Natural killer cell (primary cell): ENCODE measurements at regions of chr9 and their contacts with region 1.

Region 1: DNA sequence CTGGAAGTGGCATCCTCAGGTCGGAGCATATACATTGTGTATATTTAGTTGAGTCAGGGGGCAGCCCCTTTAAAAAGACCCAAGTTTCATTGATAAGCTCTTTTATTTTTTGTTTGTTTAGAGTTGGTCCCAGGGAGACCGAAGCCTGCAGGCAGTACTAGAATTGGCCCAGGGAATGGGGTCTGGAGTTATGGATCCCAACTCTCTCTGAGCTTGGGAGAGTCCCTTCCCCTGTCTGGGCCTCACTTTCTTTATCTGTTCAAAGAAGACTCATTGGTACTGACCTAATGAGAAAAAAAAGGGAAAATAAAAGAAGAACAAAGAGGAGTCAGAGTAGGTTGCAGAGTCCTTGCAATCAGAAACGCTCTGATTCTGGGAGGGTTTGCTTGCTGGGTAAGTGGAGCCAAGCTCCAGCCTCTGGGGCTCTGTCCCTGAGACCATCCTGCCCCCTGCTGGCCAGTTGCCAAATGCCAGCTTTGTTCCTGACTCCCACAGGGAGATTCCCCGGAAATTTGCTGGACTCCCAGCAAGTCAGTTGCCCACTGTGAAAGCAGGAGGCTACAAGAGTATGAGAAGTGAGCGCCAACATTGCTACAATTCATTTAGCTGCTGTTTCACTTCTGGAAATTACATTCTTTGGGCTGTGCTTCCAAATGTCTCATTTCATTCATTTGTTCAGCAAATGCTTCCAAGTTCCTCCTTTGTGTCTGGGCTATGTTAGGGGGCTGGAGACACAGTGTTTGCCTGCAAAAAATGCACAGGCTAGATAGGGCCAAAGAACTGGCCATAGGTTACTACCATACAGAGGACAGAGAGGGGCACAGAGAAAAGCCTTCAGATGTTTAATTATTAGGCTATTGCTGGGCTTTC is 156.2 kb downstream of the MELK start:
- DNase-seq: peak; percentile 53 to 75
- ATAC-seq: peak in 1 of 3 donors; percentile 69
- H3K4me3 ChIP-seq: no peak overlapping the region
- H3K4me3 Mint-ChIP-seq: no peak overlapping the region
- H3K27ac ChIP-seq: no peak overlapping the region
- H3K27ac Mint-ChIP-seq: no peak overlapping the region
- H3K4me1 ChIP-seq: no peaks in the 10 kb centered on the region
- H3K4me1 Mint-ChIP-seq: no peaks in the 10 kb centered on the region
- H3K27me3 ChIP-seq: no peaks in the 10 kb centered on the region
- H3K27me3 Mint-ChIP-seq: no peaks in the 10 kb centered on the region
- CTCF ChIP-seq: peak; percentile 83

Region 2: DNA sequence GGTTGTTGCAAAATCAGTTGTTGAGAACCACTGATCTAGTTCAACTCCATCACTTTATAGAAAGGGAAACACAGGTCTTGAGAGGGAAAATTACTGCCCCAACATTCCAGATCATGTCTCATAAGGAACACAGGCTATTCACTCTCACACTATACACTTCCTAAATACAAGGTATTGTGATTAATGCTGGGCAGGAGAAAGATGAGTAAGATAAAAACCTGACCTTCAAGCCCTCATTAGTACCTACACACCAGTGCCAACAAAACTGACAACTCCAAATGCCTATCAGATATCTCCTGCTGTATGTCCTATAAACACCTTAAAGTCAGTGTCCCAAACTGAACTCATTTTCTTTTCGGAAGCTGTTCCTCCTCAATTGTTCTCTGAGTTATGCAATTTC is 478.8 kb before region 1 on chr9:
- intact Hi-C with region 1: loop called (anchors 5 kb)
- DNase-seq: no peak
- ATAC-seq: no peak
- H3K4me3 ChIP-seq: no peak overlapping the region
- H3K4me3 Mint-ChIP-seq: no peak overlapping the region
- H3K27ac ChIP-seq: no peak overlapping the region
- H3K27ac Mint-ChIP-seq: peak overlapping the region in 1 of 2 donors; percentile 9
- H3K4me1 ChIP-seq: no peaks in the 10 kb centered on the region
- H3K4me1 Mint-ChIP-seq: peaks cover 0 to 12% of the 10 kb centered on the region in 2 donors
- H3K27me3 ChIP-seq: no peaks in the 10 kb centered on the region
- H3K27me3 Mint-ChIP-seq: no peaks in the 10 kb centered on the region
- CTCF ChIP-seq: no peak

Region 3: DNA sequence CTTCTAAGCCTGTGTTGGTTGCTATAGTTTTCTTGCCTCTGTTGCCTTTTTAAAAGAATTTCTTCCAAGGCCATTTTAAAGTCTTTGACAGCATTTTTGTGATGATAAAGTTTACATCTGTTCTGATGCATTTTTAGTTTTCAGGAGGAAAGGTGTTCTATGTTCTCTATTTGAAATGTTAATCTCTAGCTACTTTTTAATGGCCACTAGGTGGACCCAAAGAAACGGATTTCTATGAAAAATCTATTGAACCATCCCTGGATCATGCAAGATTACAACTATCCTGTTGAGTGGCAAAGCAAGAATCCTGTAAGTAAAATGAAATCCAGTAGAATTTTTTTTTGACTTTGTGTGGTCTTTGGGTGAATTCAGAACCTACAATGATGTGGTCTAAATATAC is 96.0 kb before region 1 on chr9:
- intact Hi-C with region 1: loop called (anchors 1 kb)
- DNase-seq: peak in 1 of 2 donors; percentile 39
- ATAC-seq: no peak
- H3K4me3 ChIP-seq: no peak overlapping the region
- H3K4me3 Mint-ChIP-seq: no peak overlapping the region
- H3K27ac ChIP-seq: no peak overlapping the region
- H3K27ac Mint-ChIP-seq: no peak overlapping the region
- H3K4me1 ChIP-seq: no peaks in the 10 kb centered on the region
- H3K4me1 Mint-ChIP-seq: no peaks in the 10 kb centered on the region
- H3K27me3 ChIP-seq: no peaks in the 10 kb centered on the region
- H3K27me3 Mint-ChIP-seq: no peaks in the 10 kb centered on the region
- CTCF ChIP-seq: peak; percentile 57